K562 (cell line): ENCODE measurements at regions of chr1 and their contacts with region 1.

Region 1: GRCh38 chr1:169348383-169349036 is 19.1 kb downstream of the NME7 start:
- DNase-seq: peak in 3 of 4 experiments; percentile 27 to 76 (median 28)
- ATAC-seq: peak; percentile 74
- H3K4me3 ChIP-seq: no peak overlapping the region
- H3K27ac ChIP-seq: no peak overlapping the region
- H3K4me1 ChIP-seq: peaks cover 0 to 10% of the 10 kb centered on the region in 2 experiments; a peak in 3 of 5 replicates
- H3K27me3 ChIP-seq: no peaks in the 10 kb centered on the region
- CTCF ChIP-seq: peak; percentile 43 to 87 (median 68); a peak in 5 of 6 replicates
- EP300 ChIP-seq: no peak
- POLR2A ChIP-seq: no peak
- RAD21 ChIP-seq: peak; percentile 96 to 98

Region 2: DNA sequence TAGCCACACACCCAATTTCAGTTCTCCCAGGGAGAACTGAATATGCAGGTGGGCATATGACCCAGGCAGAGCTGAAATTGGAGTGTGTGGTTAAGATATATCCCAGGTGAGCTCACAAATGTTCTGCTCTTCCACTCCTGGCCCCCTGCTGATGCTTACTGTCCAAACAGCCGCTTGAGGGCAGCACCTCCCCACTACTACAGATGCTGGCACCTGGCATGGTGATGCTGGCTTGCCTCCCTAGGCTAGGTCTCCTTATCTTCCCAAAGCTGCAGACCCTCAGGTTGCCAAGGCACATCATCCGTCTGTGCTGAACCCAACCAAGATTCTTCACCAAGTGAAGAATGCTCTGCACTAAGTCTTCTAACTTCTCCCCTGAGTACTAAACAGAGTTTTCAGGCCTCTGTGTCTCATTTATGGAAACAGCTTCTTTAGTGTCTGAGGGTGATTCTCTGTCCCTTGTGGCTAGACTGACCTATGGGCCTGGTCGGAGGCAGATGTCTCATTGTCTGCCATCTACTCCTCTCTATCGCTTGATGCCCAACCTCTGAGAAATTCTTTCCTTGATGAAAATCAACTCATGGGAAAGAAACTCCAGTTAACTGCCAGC is 744.9 kb before region 1 on chr1:
- CTCF ChIA-PET with region 1: interaction called, 8 read pairs
- POLR2A ChIA-PET with region 1: no interaction called
- in situ Hi-C with region 1: loop called (anchors 25 kb)
- intact Hi-C with region 1: loop called (anchors 1 kb)
- DNase-seq: peak; percentile 62 to 76 (median 68)
- ATAC-seq: peak; percentile 97
- H3K4me3 ChIP-seq: no peak overlapping the region
- H3K27ac ChIP-seq: no peak overlapping the region
- H3K4me1 ChIP-seq: no peaks in the 10 kb centered on the region
- H3K27me3 ChIP-seq: peaks cover 2 to 4% of the 10 kb centered on the region in 2 experiments; a peak in 2 of 5 replicates
- CTCF ChIP-seq: peak; percentile 80 to 88 (median 87)
- EP300 ChIP-seq: no peak
- POLR2A ChIP-seq: no peak
- RAD21 ChIP-seq: peak; percentile 92 to 95

Region 3: GRCh38 chr1:168811176-168811575 is 537.3 kb before region 1 on chr1:
- CTCF ChIA-PET with region 1: no interaction called
- POLR2A ChIA-PET with region 1: no interaction called
- in situ Hi-C with region 1: no loop called
- intact Hi-C with region 1: loop called (anchors 10 kb)
- DNase-seq: no peak
- ATAC-seq: no peak
- H3K4me3 ChIP-seq: no peak overlapping the region
- H3K27ac ChIP-seq: no peak overlapping the region
- H3K4me1 ChIP-seq: no peaks in the 10 kb centered on the region
- H3K27me3 ChIP-seq: no peaks in the 10 kb centered on the region
- CTCF ChIP-seq: no peak
- EP300 ChIP-seq: no peak
- POLR2A ChIP-seq: no peak
- RAD21 ChIP-seq: no peak

Region 4: GRCh38 chr1:169129109-169129789 is 219.3 kb before region 1 on chr1:
- CTCF ChIA-PET with region 1: no interaction called
- POLR2A ChIA-PET with region 1: no interaction called
- in situ Hi-C with region 1: no loop called
- intact Hi-C with region 1: loop called (anchors 5 kb)
- DNase-seq: no peak
- ATAC-seq: no peak
- H3K4me3 ChIP-seq: no peak overlapping the region
- H3K27ac ChIP-seq: no peak overlapping the region
- H3K4me1 ChIP-seq: no peaks in the 10 kb centered on the region
- H3K27me3 ChIP-seq: no peaks in the 10 kb centered on the region
- CTCF ChIP-seq: no peak
- EP300 ChIP-seq: no peak
- POLR2A ChIP-seq: no peak
- RAD21 ChIP-seq: no peak

Region 5: DNA sequence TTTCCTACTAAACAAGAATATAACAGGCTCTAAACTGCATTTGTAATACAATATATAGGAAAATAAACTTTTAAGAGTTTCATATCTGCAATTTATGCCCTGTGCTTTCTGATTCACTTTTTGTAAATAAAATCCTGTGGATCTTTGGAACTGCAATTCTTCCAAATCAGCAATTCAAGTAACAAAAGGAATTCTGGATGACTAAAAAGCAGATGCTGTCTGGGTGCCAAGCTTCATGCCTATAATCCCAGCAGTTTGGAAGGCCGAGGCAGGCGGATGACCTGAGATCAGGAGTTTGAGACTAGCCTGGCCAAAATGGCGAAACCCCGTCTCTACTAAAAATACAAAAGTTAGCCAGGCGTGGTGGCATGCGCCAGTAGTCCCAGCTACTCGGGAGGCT is 12.8 kb after region 1 on chr1:
- CTCF ChIA-PET with region 1: no interaction called
- POLR2A ChIA-PET with region 1: interaction called, 10 read pairs
- in situ Hi-C with region 1: no loop called
- intact Hi-C with region 1: no loop called
- DNase-seq: no peak
- ATAC-seq: no peak
- H3K4me3 ChIP-seq: no peak overlapping the region
- H3K27ac ChIP-seq: no peak overlapping the region
- H3K4me1 ChIP-seq: peaks cover 0 to 2% of the 10 kb centered on the region in 2 experiments; a peak in 1 of 5 replicates
- H3K27me3 ChIP-seq: no peaks in the 10 kb centered on the region
- CTCF ChIP-seq: no peak
- EP300 ChIP-seq: no peak
- POLR2A ChIP-seq: no peak
- RAD21 ChIP-seq: no peak

Region 6: GRCh38 chr1:169414952-169415351 is 66.4 kb after region 1 on chr1:
- CTCF ChIA-PET with region 1: no interaction called
- POLR2A ChIA-PET with region 1: no interaction called
- in situ Hi-C with region 1: no loop called
- intact Hi-C with region 1: no loop called
- DNase-seq: no peak
- ATAC-seq: no peak
- H3K4me3 ChIP-seq: no peak overlapping the region
- H3K27ac ChIP-seq: no peak overlapping the region
- H3K4me1 ChIP-seq: no peaks in the 10 kb centered on the region
- H3K27me3 ChIP-seq: no peaks in the 10 kb centered on the region
- CTCF ChIP-seq: no peak
- EP300 ChIP-seq: no peak
- POLR2A ChIP-seq: no peak
- RAD21 ChIP-seq: no peak